PC-3 (cell line): ENCODE measurements at regions of chr3 and their contacts with region 1.

Region 1: DNA sequence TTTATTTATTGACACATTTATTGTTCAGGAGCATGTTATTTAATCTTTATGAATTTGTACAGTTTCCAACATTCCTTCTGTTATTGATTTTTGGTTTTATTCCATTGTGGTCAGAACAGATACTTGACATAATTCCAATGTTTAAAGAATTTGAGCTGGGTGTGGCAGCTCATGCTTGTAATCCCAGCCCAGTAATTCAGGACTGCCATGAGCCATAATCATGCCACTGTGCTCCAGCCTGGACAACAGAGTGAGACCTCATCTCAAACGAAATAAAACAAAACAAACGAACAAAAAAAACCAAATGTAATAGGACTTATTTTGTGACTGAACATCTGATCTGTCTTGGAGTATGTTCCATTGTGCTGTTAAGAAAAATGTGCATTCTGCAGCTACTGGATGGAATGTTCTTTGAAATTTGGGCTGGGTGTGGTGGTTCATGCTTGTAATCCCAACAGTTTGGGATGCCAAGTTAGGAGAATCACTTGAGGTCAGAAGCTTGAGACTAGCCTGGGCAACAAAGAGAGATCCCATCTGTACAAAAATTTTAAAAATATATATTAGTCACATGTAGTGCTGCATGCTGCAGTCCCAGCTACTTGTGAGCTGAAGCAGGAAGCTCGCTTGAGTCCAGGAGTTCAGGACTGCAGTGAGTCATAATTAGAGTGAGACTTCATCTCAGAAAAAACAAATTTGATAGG is 62.7 kb upstream of the PLSCR4 start:
- DNase-seq: peak; percentile 88
- ATAC-seq: peak; percentile 91
- H3K4me3 ChIP-seq: 0 out of 2 replicates have a peak overlapping the region, but pooled peaks have one; percentile 22
- H3K27ac ChIP-seq: peak overlapping the region; percentile 90
- H3K4me1 ChIP-seq: peaks cover 34% of the 10 kb centered on the region
- H3K27me3 ChIP-seq: no peaks in the 10 kb centered on the region
- CTCF ChIP-seq: no peak

Region 2: DNA sequence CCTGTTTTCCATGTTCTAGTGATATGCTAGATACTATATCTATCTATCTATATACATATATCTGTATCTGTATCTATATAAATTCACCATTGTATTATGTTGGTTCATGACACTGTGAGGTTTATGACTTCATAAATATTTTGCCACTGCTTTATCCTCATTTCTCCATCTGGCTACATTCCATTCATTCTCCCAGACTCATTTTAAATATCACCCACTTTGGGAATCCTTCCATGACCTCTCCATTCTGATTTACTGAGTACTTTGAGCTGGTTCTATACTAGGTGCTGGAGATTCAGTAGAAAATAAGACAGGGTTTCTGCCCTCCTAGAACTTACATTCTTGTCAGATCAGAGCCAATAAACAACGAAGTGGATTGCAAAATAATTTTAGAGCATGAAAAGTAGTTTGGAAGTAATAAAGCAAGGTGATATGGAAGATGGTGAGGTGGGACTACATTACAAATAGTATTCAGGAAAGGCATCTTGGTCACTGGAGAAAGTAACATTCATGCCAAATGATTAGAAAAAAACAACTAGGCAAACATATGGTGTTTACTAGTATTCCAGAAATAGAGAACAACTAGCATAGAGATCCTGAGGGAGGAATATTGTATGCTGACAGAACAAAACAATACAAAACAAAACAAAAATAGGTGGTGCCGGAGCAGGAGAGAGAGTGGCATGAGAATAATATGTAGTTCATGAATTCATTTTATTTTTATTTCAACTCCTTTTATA is 51.0 kb before region 1 on chr3:
- CTCF ChIA-PET with region 1: no interaction called
- POLR2A ChIA-PET with region 1: no interaction called
- intact Hi-C with region 1: loop called (anchors 10 kb)
- DNase-seq: no peak
- ATAC-seq: no peak
- H3K4me3 ChIP-seq: no peak overlapping the region
- H3K27ac ChIP-seq: no peak overlapping the region
- H3K4me1 ChIP-seq: no peaks in the 10 kb centered on the region
- H3K27me3 ChIP-seq: no peaks in the 10 kb centered on the region
- CTCF ChIP-seq: no peak

Region 3: GRCh38 chr3:146368882-146369523 is 55.4 kb after region 1 on chr3:
- CTCF ChIA-PET with region 1: no interaction called
- POLR2A ChIA-PET with region 1: no interaction called
- intact Hi-C with region 1: no loop called
- DNase-seq: no peak
- ATAC-seq: no peak
- H3K4me3 ChIP-seq: no peak overlapping the region
- H3K27ac ChIP-seq: no peak overlapping the region
- H3K4me1 ChIP-seq: no peaks in the 10 kb centered on the region
- H3K27me3 ChIP-seq: no peaks in the 10 kb centered on the region
- CTCF ChIP-seq: no peak